PC-9 (cell line): ENCODE measurements at regions of chr21 and their contacts with region 1.

Region 1: DNA sequence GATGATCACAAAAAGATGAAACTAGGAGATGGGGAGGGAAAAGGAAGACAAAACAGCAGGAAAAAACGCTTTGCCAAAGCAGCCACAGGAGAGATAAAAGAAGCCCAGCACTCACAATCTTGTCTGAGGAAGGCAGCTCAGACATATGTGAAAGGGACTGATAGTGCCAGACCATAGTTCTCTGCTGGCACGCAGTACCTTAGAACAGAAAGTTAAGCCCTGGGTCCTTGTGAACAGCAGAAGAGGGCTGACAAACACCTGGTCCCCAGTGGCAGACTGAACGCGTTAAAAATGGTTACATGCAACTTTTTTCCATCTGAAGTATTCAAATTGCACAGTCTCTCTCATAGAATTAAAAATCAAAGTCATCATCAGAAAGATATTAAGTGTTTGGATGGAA is 433.2 kb upstream of the ADAMTS5 start:
- DNase-seq: no peak
- H3K4me3 ChIP-seq: no peak overlapping the region
- H3K27ac ChIP-seq: no peak overlapping the region
- H3K4me1 ChIP-seq: no peaks in the 10 kb centered on the region
- H3K27me3 ChIP-seq: no peaks in the 10 kb centered on the region
- CTCF ChIP-seq: no peak

Region 2: GRCh38 chr21:27346041-27346448 is 54.0 kb before region 1 on chr21:
- CTCF ChIA-PET with region 1: no interaction called
- POLR2A ChIA-PET with region 1: no interaction called
- intact Hi-C with region 1: loop called (anchors 2 kb)
- DNase-seq: no peak
- H3K4me3 ChIP-seq: no peak overlapping the region
- H3K27ac ChIP-seq: no peak overlapping the region
- H3K4me1 ChIP-seq: no peaks in the 10 kb centered on the region
- H3K27me3 ChIP-seq: no peaks in the 10 kb centered on the region
- CTCF ChIP-seq: no peak

Region 3: GRCh38 chr21:27371115-27371974 is 28.7 kb before region 1 on chr21:
- CTCF ChIA-PET with region 1: no interaction called
- POLR2A ChIA-PET with region 1: no interaction called
- intact Hi-C with region 1: no loop called
- DNase-seq: no peak
- H3K4me3 ChIP-seq: no peak overlapping the region
- H3K27ac ChIP-seq: no peak overlapping the region
- H3K4me1 ChIP-seq: no peaks in the 10 kb centered on the region
- H3K27me3 ChIP-seq: no peaks in the 10 kb centered on the region
- CTCF ChIP-seq: no peak

Region 4: GRCh38 chr21:27429710-27430341 is 29.8 kb after region 1 on chr21:
- CTCF ChIA-PET with region 1: no interaction called
- POLR2A ChIA-PET with region 1: no interaction called
- intact Hi-C with region 1: no loop called
- DNase-seq: no peak
- H3K4me3 ChIP-seq: no peak overlapping the region
- H3K27ac ChIP-seq: no peak overlapping the region
- H3K4me1 ChIP-seq: no peaks in the 10 kb centered on the region
- H3K27me3 ChIP-seq: no peaks in the 10 kb centered on the region
- CTCF ChIP-seq: no peak